ENCODE measurements at regions of chr1 and their contacts with region 1.

Region 1: DNA sequence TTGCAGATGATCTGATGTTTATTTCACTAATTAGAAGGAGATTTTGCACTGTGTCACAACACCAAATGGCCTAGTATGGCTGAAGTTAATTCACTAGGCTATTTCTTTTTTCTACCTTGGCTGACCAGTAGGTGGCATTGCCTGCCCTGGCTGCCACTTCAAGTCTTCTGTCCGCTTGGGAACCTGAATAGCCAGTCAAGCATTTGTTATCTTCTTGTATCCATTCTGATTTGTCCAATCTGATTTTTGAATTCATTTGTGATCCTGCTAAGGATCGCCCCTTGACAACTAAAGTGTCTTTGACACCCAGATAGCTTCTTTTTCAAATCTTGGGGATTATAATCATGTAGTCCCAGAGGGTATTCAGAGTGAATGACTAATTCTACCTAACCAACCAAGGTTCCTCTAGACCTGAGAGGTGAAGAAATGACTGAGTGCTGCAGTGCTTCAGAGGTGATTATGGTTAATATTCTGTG is 99.4 kb downstream of the GIPC2 start:
- DNase-seq: peak; percentile 78
- H3K4me3 ChIP-seq: no peak overlapping the region
- H3K27ac ChIP-seq: no peak overlapping the region
- H3K4me1 ChIP-seq: peaks cover 20% of the 10 kb centered on the region
- H3K27me3 ChIP-seq: no peaks in the 10 kb centered on the region
- CTCF ChIP-seq: peak; percentile 93

Region 2: GRCh38 chr1:78419309-78419708 is 274.2 kb after region 1 on chr1:
- CTCF ChIA-PET with region 1: no interaction called
- POLR2A ChIA-PET with region 1: no interaction called
- intact Hi-C with region 1: loop called (anchors 10 kb)
- DNase-seq: peak; percentile 64
- H3K4me3 ChIP-seq: peak overlapping the region; percentile 22
- H3K27ac ChIP-seq: peak overlapping the region; percentile 43
- H3K4me1 ChIP-seq: peaks cover 17% of the 10 kb centered on the region
- H3K27me3 ChIP-seq: no peaks in the 10 kb centered on the region
- CTCF ChIP-seq: no peak

Region 3: DNA sequence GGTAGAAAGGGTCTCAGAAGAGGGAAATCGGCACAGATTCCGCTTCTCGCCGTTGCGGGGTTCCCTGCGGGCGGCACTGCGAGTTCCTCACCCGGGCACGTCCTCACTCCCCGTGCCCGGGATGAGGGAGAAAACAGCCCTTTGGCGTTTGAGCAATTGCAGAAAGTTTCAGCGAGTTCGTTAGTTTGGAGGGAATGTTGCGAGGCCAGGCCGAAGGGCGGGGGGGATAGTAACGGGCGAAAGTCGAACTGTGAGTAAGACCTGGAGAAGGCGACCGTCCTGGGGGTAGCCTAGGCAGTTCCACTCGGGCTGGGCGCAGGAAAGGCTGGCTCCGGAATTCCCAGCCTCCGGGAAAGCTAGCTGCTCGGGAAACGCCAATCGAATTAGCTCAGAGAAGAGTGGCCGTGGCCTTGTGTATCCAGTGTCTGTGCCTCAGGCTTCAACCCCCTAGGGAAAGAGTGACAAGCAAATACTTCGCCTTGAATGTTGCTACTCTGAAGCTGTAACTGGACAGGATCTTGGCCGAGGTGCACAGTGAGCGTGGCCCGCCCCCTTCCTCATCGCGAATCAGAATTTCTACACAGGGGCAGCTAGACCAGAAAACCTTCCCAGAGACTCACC is 346.4 kb after region 1 on chr1:
- CTCF ChIA-PET with region 1: no interaction called
- POLR2A ChIA-PET with region 1: no interaction called
- intact Hi-C with region 1: loop called (anchors 5 kb)
- DNase-seq: peak; percentile 59
- H3K4me3 ChIP-seq: peak overlapping the region; percentile 53
- H3K27ac ChIP-seq: peak overlapping the region; percentile 49
- H3K4me1 ChIP-seq: peaks cover 17% of the 10 kb centered on the region
- H3K27me3 ChIP-seq: no peaks in the 10 kb centered on the region
- CTCF ChIP-seq: no peak

Region 4: DNA sequence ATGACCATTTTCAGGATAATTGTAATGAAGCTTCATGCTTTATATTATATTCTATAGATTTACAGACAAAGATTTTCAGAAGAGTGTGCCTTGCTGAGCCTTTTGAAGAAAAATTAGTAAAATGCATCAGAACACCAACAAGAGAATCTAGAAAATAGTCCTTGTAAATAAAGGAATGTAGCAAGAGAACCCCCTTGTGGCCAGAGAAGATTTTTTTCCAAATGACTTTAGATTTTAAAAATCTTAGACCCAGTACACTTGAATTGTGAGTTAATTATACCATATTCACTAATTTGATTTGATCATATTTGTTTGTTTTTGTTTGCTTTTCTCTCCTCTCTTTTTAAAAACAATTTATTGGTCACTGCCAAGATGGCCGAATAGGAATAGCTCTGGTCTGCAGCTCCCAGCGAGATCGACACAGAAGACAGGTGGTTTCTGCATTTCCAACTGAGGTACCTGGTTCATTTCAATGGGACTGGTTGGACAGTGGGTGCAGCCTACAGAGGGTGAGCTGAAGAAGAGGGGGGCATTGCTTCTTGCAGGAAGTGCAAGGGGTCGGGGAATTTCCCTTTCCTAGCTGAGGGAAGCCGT is 462.3 kb after region 1 on chr1:
- CTCF ChIA-PET with region 1: interaction called, 5 read pairs
- POLR2A ChIA-PET with region 1: no interaction called
- intact Hi-C with region 1: loop called (anchors 1 kb)
- DNase-seq: peak; percentile 54
- H3K4me3 ChIP-seq: no peak overlapping the region
- H3K27ac ChIP-seq: no peak overlapping the region
- H3K4me1 ChIP-seq: no peaks in the 10 kb centered on the region
- H3K27me3 ChIP-seq: no peaks in the 10 kb centered on the region
- CTCF ChIP-seq: peak; percentile 74

Region 5: GRCh38 chr1:78676347-78676982 is 531.3 kb after region 1 on chr1:
- CTCF ChIA-PET with region 1: no interaction called
- POLR2A ChIA-PET with region 1: interaction called, 4 read pairs
- intact Hi-C with region 1: loop called (anchors 2 kb)
- DNase-seq: peak; percentile 76
- H3K4me3 ChIP-seq: no peak overlapping the region
- H3K27ac ChIP-seq: no peak overlapping the region
- H3K4me1 ChIP-seq: no peaks in the 10 kb centered on the region
- H3K27me3 ChIP-seq: no peaks in the 10 kb centered on the region
- CTCF ChIP-seq: peak; percentile 91